ENCODE measurements at regions of chrX and their contacts with region 1.

Region 1: DNA sequence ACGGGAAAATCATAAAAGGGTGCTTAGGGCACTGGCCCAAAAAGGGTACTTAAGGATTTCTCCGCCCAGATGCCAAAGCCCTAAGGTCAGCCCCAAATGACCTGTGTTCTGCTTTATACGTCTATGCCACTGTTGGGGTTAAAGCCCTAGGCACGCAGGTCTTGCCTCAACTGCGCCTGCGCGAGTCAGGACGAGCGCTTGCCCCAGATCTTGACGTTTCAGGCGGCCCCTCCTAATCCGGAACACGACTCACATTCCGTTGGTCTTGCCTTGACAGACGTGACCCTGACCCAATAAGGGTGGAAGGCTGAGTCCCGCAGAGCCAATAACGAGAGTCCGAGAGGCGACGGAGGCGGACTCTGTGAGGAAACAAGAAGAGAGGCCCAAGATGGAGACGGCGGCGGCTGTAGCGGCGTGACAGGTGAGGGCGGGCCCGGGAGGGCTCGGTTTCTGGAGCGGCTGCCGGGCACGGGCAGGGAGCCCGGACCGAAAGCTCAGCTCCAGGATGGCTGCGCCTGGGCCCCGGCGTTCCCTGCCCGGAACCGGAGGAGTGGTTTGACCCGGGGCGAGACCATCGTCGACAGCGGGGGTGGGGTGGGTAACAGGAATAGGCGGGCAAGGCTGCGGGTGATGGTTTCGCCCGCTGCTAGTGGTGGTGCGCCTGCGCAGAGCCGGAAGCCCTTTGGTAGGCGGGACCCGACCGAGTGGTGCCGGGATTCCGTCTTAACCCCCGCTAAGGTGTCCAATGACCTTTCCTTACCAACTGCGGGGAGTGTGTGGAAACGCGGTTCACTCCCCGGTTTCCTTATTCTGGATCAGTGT is at the start of gene ARAF:
- DNase-seq: peak; percentile 93
- H3K4me3 Mint-ChIP-seq: peak within 1 kb of the TSS; percentile 92
- H3K27ac Mint-ChIP-seq: peak within 1 kb of the TSS; percentile 99
- H3K4me1 Mint-ChIP-seq: peaks cover 40% of the 10 kb centered on the region
- H3K27me3 Mint-ChIP-seq: no peaks in the 10 kb centered on the region
- total RNA-seq, gene ARAF: 75.9 and 84.4 TPM in 2 replicates

Region 2: GRCh38 chrX:47217642-47218279 is 343.3 kb before region 1 on chrX:
- intact Hi-C with region 1: loop called (anchors 1 kb)
- DNase-seq: peak; percentile 92
- H3K4me3 Mint-ChIP-seq: peak overlapping the region; percentile 90
- H3K27ac Mint-ChIP-seq: peak overlapping the region; percentile 97
- H3K4me1 Mint-ChIP-seq: peaks cover 41% of the 10 kb centered on the region
- H3K27me3 Mint-ChIP-seq: no peaks in the 10 kb centered on the region

Region 3: GRCh38 chrX:47523297-47523696 is 37.7 kb before region 1 on chrX:
- intact Hi-C with region 1: loop called (anchors 1 kb)
- DNase-seq: peak; percentile 69
- H3K4me3 Mint-ChIP-seq: peak overlapping the region; percentile 70
- H3K27ac Mint-ChIP-seq: no peak overlapping the region
- H3K4me1 Mint-ChIP-seq: no peaks in the 10 kb centered on the region
- H3K27me3 Mint-ChIP-seq: no peaks in the 10 kb centered on the region

Region 4: GRCh38 chrX:47633689-47634590 is 72.9 kb after region 1 on chrX:
- intact Hi-C with region 1: loop called (anchors 2 kb)
- DNase-seq: no peak
- H3K4me3 Mint-ChIP-seq: no peak overlapping the region
- H3K27ac Mint-ChIP-seq: no peak overlapping the region
- H3K4me1 Mint-ChIP-seq: peaks cover 27% of the 10 kb centered on the region
- H3K27me3 Mint-ChIP-seq: peaks cover 2% of the 10 kb centered on the region

Region 5: GRCh38 chrX:47723689-47724088 is 162.6 kb after region 1 on chrX:
- intact Hi-C with region 1: loop called (anchors 2 kb)
- DNase-seq: peak; percentile 0
- H3K4me3 Mint-ChIP-seq: no peak overlapping the region
- H3K27ac Mint-ChIP-seq: no peak overlapping the region
- H3K4me1 Mint-ChIP-seq: no peaks in the 10 kb centered on the region
- H3K27me3 Mint-ChIP-seq: peaks cover 2% of the 10 kb centered on the region

Region 6: DNA sequence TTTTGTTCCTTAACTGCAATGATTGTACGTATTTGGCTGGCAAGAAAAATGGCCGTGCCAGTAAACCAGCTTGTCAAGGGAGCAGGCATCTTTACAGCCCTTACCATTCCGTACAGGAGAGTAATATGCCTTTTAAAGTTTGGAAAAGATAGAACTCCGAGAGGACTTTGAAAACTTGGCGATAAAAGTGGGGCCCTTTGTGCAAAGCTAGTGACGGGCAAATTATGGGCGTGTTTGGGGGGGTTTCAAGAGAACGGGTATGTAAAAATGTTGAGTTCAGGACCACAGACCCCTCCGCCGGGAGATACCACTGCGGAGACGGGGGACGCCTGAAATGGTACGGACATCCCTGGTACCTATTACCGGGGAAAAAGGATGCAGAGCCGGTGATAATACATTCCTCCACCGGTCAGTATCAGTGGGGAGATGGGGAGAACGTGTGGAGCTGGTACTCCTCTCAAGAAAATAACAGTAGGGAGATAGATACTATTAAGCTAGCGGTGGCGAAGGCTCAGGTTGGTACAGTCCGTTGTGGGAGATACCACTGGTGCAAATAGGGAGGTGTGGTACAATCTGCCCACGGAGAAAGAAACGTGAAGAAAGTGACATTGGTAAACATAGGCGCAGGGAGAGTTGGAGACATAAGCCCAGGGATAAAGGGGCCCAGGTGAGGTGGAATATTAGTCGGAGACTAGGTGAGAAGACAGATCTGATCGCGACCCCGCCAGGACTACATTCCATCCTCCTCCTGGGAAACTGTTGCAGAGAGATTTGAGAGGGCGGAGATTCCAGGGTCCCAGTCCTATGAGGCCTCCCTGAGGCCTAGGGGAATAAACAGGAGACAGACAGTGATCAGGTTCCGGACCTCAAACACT is 460.2 kb after region 1 on chrX:
- intact Hi-C with region 1: loop called (anchors 5 kb)
- DNase-seq: peak; percentile 54
- H3K4me3 Mint-ChIP-seq: peak overlapping the region; percentile 92
- H3K27ac Mint-ChIP-seq: peak overlapping the region; percentile 97
- H3K4me1 Mint-ChIP-seq: peaks cover 6% of the 10 kb centered on the region
- H3K27me3 Mint-ChIP-seq: peaks cover 7% of the 10 kb centered on the region